Caco-2 (cell line): ENCODE measurements at regions of chr12 and their contacts with region 1.

Region 1: GRCh38 chr12:59595883-59596540 is at the start of gene SLC16A7:
- DNase-seq: peak; percentile 58 to 69
- H3K4me3 ChIP-seq: peak within 1 kb of the TSS; percentile 57
- H3K4me3 Mint-ChIP-seq: peak within 1 kb of the TSS; percentile 96
- H3K27ac Mint-ChIP-seq: peak within 1 kb of the TSS; percentile 69
- H3K4me1 ChIP-seq: peaks cover 9% of the 10 kb centered on the region
- H3K4me1 Mint-ChIP-seq: peaks cover 8% of the 10 kb centered on the region
- H3K27me3 ChIP-seq: no peaks in the 10 kb centered on the region; the same call in 1 of the 2 replicates
- H3K27me3 Mint-ChIP-seq: peaks cover 12% of the 10 kb centered on the region
- CTCF ChIP-seq: peak in 1 of 2 experiments; percentile 5
- total RNA-seq, gene SLC16A7: 5.5 and 6.6 TPM in 2 replicates

Region 2: DNA sequence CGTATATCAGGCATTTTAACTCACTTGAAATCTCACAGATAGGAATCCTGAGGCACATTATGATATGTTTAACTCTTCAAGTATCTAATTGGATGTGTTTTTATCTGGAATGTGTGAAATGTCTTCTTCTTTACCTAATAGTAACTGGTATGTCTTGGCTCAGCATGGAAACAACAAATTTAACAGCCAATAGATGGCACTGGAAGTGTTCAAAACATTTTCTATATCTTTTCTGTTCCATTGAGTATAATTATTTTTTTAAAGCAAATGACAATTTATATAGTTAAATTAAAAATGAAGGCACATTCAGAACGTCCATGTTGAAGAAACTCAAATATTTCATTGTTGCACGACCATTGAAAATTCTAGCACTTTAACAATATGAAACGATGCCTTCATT is 164.7 kb before region 1 on chr12:
- CTCF ChIA-PET with region 1: no interaction called
- POLR2A ChIA-PET with region 1: no interaction called
- intact Hi-C with region 1: loop called (anchors 5 kb)
- DNase-seq: no peak
- H3K4me3 ChIP-seq: no peak overlapping the region
- H3K4me3 Mint-ChIP-seq: no peak overlapping the region
- H3K27ac Mint-ChIP-seq: no peak overlapping the region
- H3K4me1 ChIP-seq: 0 out of 2 replicates have a peak, but pooled peaks cover 11% of the 10 kb centered on the region
- H3K4me1 Mint-ChIP-seq: no peaks in the 10 kb centered on the region
- H3K27me3 ChIP-seq: no peaks in the 10 kb centered on the region
- H3K27me3 Mint-ChIP-seq: no peaks in the 10 kb centered on the region
- CTCF ChIP-seq: no peak

Region 3: DNA sequence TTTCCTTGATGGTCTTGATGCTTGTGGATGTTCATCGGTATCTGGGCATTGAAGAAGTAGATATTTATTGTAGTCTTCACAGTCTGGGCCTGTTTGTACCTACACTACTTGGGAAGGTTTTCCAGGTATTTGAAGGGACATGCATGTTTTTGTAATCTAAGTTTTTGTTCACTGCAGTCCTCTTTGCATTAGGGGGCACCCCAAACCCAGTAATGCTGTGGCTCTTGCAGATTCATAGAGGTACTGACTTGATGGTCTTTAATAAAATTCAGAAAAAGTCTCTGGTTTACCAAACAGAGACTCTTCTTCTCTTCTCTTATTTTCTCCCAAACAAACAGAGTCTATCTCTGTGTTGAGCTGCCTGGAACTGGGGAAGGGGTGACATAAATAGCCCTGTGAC is 151.1 kb before region 1 on chr12:
- CTCF ChIA-PET with region 1: interaction called, 3 read pairs
- POLR2A ChIA-PET with region 1: interaction called, 3 read pairs
- intact Hi-C with region 1: loop called (anchors 5 kb)
- DNase-seq: no peak
- H3K4me3 ChIP-seq: no peak overlapping the region
- H3K4me3 Mint-ChIP-seq: no peak overlapping the region
- H3K27ac Mint-ChIP-seq: no peak overlapping the region
- H3K4me1 ChIP-seq: peaks cover 32% of the 10 kb centered on the region
- H3K4me1 Mint-ChIP-seq: peaks cover 24% of the 10 kb centered on the region
- H3K27me3 ChIP-seq: no peaks in the 10 kb centered on the region
- H3K27me3 Mint-ChIP-seq: no peaks in the 10 kb centered on the region
- CTCF ChIP-seq: no peak

Region 4: GRCh38 chr12:59649203-59649602 is 53.2 kb after region 1 on chr12:
- CTCF ChIA-PET with region 1: no interaction called
- POLR2A ChIA-PET with region 1: no interaction called
- intact Hi-C with region 1: loop called (anchors 2 kb)
- DNase-seq: peak in 1 of 2 experiments; percentile 57
- H3K4me3 ChIP-seq: no peak overlapping the region
- H3K4me3 Mint-ChIP-seq: no peak overlapping the region
- H3K27ac Mint-ChIP-seq: no peak overlapping the region
- H3K4me1 ChIP-seq: peaks cover 40% of the 10 kb centered on the region
- H3K4me1 Mint-ChIP-seq: peaks cover 17% of the 10 kb centered on the region
- H3K27me3 ChIP-seq: no peaks in the 10 kb centered on the region
- H3K27me3 Mint-ChIP-seq: no peaks in the 10 kb centered on the region
- CTCF ChIP-seq: no peak

Region 5: DNA sequence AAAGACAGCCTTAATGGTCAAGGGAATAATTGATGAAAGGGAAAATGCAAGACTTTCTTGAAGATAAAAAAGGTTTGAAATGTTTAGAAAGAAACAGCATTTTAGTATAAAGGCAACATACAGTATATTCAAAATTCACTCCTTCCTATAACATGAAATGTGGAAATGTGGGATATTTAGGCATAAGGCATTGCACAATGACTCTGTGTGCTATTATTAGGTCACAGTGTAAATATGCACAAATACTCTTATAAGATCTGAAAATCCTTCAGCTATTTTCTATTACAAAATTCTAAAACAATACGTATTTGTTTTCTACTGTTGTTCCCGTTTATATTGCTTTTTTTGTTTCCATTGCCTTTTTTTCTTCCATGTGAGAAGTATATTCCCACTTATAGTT is 127.5 kb after region 1 on chr12:
- CTCF ChIA-PET with region 1: no interaction called
- POLR2A ChIA-PET with region 1: no interaction called
- intact Hi-C with region 1: loop called (anchors 5 kb)
- DNase-seq: no peak
- H3K4me3 ChIP-seq: no peak overlapping the region
- H3K4me3 Mint-ChIP-seq: no peak overlapping the region
- H3K27ac Mint-ChIP-seq: no peak overlapping the region
- H3K4me1 ChIP-seq: peaks cover 12% of the 10 kb centered on the region
- H3K4me1 Mint-ChIP-seq: no peaks in the 10 kb centered on the region
- H3K27me3 ChIP-seq: no peaks in the 10 kb centered on the region
- H3K27me3 Mint-ChIP-seq: no peaks in the 10 kb centered on the region
- CTCF ChIP-seq: no peak

Region 6: DNA sequence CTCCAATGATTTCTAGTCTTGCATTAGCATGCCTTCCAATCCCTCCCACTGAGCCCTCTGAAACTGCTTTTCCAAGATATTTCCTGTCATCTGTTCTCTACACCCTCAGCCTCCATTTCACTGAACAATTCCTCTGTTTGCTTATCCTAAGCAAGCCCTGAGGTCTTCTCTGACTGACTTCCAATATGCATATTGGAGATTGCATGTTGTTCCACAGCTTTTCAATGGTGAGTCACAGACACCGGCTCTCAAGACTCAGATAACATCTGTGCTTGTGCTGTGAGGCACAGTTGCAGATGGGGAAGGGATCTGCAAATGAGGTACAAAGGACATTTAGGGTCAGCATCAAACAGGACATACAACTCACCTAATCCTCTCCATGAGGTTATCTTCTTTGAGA is 140.8 kb after region 1 on chr12:
- CTCF ChIA-PET with region 1: no interaction called
- POLR2A ChIA-PET with region 1: no interaction called
- intact Hi-C with region 1: loop called (anchors 5 kb)
- DNase-seq: peak in 1 of 2 experiments; percentile 32
- H3K4me3 ChIP-seq: no peak overlapping the region
- H3K4me3 Mint-ChIP-seq: peak overlapping the region; percentile 11
- H3K27ac Mint-ChIP-seq: peak overlapping the region; percentile 20
- H3K4me1 ChIP-seq: peaks cover 3% of the 10 kb centered on the region; the same call in 1 of the 2 replicates
- H3K4me1 Mint-ChIP-seq: peaks cover 7% of the 10 kb centered on the region
- H3K27me3 ChIP-seq: no peaks in the 10 kb centered on the region
- H3K27me3 Mint-ChIP-seq: no peaks in the 10 kb centered on the region
- CTCF ChIP-seq: no peak

Region 7: DNA sequence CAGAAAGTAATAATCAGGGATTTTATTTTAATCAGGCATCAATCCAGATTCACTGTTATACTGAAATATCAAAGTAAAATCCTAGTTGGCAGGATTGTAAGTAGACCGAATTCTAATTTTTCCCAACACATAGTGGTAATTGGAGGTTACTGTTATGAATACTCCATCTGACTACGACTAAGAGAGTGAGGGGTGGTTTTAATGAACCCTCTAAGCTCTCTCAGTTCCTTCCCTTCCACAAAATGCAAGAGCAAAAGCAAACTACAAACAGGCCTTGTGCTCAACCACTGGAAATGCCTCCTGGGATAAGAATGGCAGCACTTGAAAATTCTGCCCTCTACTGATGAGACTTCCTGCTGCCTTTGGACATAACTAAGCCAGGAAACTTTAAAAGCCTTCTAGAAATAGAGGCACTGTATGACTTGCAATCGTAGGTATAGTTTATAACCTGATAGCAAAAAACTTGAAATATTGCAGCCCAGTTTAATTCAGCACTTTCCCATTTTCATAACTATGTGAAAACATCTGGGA is 184.7 kb after region 1 on chr12:
- CTCF ChIA-PET with region 1: no interaction called
- POLR2A ChIA-PET with region 1: no interaction called
- intact Hi-C with region 1: loop called (anchors 5 kb)
- DNase-seq: peak in 1 of 2 experiments; percentile 28
- H3K4me3 ChIP-seq: no peak overlapping the region
- H3K4me3 Mint-ChIP-seq: no peak overlapping the region
- H3K27ac Mint-ChIP-seq: no peak overlapping the region
- H3K4me1 ChIP-seq: no peaks in the 10 kb centered on the region
- H3K4me1 Mint-ChIP-seq: no peaks in the 10 kb centered on the region
- H3K27me3 ChIP-seq: no peaks in the 10 kb centered on the region
- H3K27me3 Mint-ChIP-seq: no peaks in the 10 kb centered on the region
- CTCF ChIP-seq: peak; percentile 16 to 45